ENCODE measurements at regions of chr7 and their contacts with region 1.

Region 1: GRCh38 chr7:129367700-129368388 is 66.4 kb upstream of the STRIP2 start:
- DNase-seq: peak; percentile 79 to 91 (median 83)
- ATAC-seq: peak; percentile 96
- H3K4me3 ChIP-seq: 0 out of 2 replicates have a peak overlapping the region, but pooled peaks have one; percentile 0
- H3K27ac ChIP-seq: no peak overlapping the region
- H3K4me1 ChIP-seq: peaks cover 6 to 15% of the 10 kb centered on the region in 2 experiments; a peak in 4 of 5 replicates
- H3K27me3 ChIP-seq: no peaks in the 10 kb centered on the region
- CTCF ChIP-seq: peak; percentile 91 to 99 (median 98)
- EP300 ChIP-seq: no peak
- POLR2A ChIP-seq: no peak
- RAD21 ChIP-seq: peak; percentile 90 to 94

Region 2: DNA sequence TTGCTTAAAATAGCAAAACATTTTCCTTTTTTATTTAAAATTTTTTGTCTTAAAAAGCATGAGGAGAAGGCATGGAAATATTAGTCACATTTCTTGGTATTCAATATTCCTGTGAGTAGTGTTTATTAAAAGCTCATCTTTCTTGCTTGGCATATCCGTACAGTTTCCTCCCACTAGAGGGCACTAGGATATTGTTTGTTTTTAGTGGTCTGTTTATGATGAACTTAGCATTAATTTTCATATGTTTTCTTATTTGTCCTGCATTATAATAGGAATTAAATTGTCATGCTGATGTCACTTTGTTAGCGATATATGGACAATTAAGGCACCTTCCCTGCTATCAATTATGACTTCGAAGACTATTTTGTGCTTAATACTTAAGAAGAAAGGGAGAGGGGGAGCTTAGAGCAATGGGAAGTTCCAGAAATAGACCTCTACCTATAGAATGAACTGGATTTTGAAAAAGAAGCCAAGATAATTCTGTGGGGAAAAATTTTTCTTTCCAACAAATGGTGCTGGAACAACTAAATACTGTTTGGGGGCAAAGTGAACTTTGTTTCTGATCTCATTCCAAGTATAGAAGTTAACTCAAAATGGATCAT is 24.6 kb before region 1 on chr7:
- CTCF ChIA-PET with region 1: interaction called, 6 read pairs
- POLR2A ChIA-PET with region 1: interaction called, 5 read pairs
- in situ Hi-C with region 1: no loop called
- intact Hi-C with region 1: loop called (anchors 1 kb)
- DNase-seq: peak; percentile 56 to 77 (median 60)
- ATAC-seq: peak; percentile 93
- H3K4me3 ChIP-seq: no peak overlapping the region
- H3K27ac ChIP-seq: no peak overlapping the region
- H3K4me1 ChIP-seq: peaks cover 0 to 9% of the 10 kb centered on the region in 2 experiments; a peak in 2 of 5 replicates
- H3K27me3 ChIP-seq: no peaks in the 10 kb centered on the region
- CTCF ChIP-seq: peak; percentile 68 to 96 (median 72); a peak in 5 of 6 replicates
- EP300 ChIP-seq: no peak
- POLR2A ChIP-seq: no peak
- RAD21 ChIP-seq: peak; percentile 86 to 88

Region 3: DNA sequence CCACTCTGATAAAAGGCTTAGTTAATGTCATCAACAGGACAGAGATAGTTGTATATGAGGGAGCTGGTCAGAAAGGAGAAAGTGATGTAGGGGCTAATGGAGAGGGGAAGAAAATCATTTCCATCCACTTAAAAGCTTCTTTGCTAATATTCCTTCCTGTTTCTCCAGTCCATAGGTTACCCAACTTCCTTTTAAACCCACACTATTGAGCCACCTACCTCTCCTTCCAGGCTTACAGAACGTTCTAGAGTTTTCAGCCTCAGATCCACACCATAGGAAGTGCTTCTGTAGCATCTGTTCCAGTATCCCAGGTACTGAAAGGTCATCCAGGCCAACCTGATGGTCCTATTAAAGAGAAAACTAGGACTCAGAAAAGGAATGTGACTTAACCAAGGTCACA is 94.6 kb after region 1 on chr7:
- CTCF ChIA-PET with region 1: interaction called, 4 read pairs
- POLR2A ChIA-PET with region 1: no interaction called
- in situ Hi-C with region 1: loop called (anchors 5 kb)
- intact Hi-C with region 1: no loop called
- DNase-seq: no peak
- ATAC-seq: no peak
- H3K4me3 ChIP-seq: no peak overlapping the region
- H3K27ac ChIP-seq: no peak overlapping the region
- H3K4me1 ChIP-seq: no peaks in the 10 kb centered on the region
- H3K27me3 ChIP-seq: no peaks in the 10 kb centered on the region
- CTCF ChIP-seq: no peak
- EP300 ChIP-seq: no peak
- POLR2A ChIP-seq: no peak
- RAD21 ChIP-seq: no peak

Region 4: GRCh38 chr7:129468087-129468486 is 100.2 kb after region 1 on chr7:
- CTCF ChIA-PET with region 1: interaction called, 60 read pairs
- POLR2A ChIA-PET with region 1: interaction called, 6 read pairs
- in situ Hi-C with region 1: loop called (anchors 5 kb)
- intact Hi-C with region 1: loop called (anchors 1 kb)
- DNase-seq: no peak
- ATAC-seq: no peak
- H3K4me3 ChIP-seq: no peak overlapping the region
- H3K27ac ChIP-seq: no peak overlapping the region
- H3K4me1 ChIP-seq: no peaks in the 10 kb centered on the region
- H3K27me3 ChIP-seq: no peaks in the 10 kb centered on the region
- CTCF ChIP-seq: no peak
- EP300 ChIP-seq: no peak
- POLR2A ChIP-seq: no peak
- RAD21 ChIP-seq: no peak

Region 5: GRCh38 chr7:130010689-130011412 is 643.0 kb after region 1 on chr7:
- CTCF ChIA-PET with region 1: no interaction called
- POLR2A ChIA-PET with region 1: no interaction called
- in situ Hi-C with region 1: loop called (anchors 25 kb)
- intact Hi-C with region 1: loop called (anchors 10 kb)
- DNase-seq: peak; percentile 84 to 93 (median 87)
- ATAC-seq: peak; percentile 72
- H3K4me3 ChIP-seq: no peak overlapping the region
- H3K27ac ChIP-seq: peak overlapping the region; percentile 73; the same call in 2 of the 3 replicates
- H3K4me1 ChIP-seq: peaks cover 15 to 19% of the 10 kb centered on the region in 2 experiments
- H3K27me3 ChIP-seq: no peaks in the 10 kb centered on the region
- CTCF ChIP-seq: peak; percentile 95 to 98 (median 97)
- EP300 ChIP-seq: no peak
- POLR2A ChIP-seq: no peak
- RAD21 ChIP-seq: peak; percentile 97 to 98

Measured in K562 (cell line).